ENCODE measurements at regions of chr3 and their contacts with region 1.

Region 1: GRCh38 chr3:69181592-69182211 is 59.3 kb upstream of the LMOD3 start:
- DNase-seq: peak; percentile 76
- H3K4me3 ChIP-seq: no peak overlapping the region
- H3K27ac ChIP-seq: peak overlapping the region; percentile 87
- H3K4me1 ChIP-seq: peaks cover 47% of the 10 kb centered on the region
- H3K27me3 ChIP-seq: no peaks in the 10 kb centered on the region
- CTCF ChIP-seq: no peak

Region 2: DNA sequence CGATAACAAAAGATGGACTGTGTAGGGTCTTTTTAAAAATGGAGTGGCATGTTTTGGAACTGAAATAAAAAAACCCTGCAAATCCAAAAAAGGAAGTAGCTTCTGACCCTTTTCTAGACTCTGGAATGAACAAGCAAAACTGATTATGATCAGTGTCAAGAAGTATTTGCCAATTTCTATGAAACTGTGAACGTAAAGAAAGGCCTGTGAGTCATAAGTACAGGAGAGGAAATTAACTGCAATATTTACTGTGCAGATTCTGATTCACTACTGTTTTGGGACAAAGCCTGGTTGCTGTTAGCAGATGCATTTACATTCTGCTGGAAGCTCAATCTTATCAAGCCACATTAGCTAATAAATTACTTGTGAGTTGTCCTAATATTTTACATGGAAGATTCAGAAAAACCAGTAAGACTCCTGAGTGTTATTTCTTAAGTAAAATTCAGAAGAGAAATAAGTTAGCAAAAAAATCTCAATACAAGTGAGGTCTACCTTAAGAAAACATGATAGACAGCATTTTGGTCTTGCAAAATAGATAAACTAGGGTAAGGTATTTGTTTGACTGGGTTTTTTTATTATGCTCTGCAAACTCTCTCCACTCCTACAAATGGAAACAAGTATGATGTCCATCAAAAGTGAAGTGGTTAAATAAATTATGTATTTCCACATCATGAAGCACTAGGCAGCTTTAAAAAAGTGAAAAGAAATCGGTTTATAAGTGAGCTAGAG is 30.9 kb after region 1 on chr3:
- CTCF ChIA-PET with region 1: no interaction called
- dilution Hi-C with region 1: no loop called
- in situ Hi-C with region 1: no loop called
- intact Hi-C with region 1: loop called (anchors 1 kb)
- DNase-seq: peak; percentile 92
- H3K4me3 ChIP-seq: no peak overlapping the region
- H3K27ac ChIP-seq: peak overlapping the region; percentile 86
- H3K4me1 ChIP-seq: peaks cover 9% of the 10 kb centered on the region
- H3K27me3 ChIP-seq: no peaks in the 10 kb centered on the region
- CTCF ChIP-seq: no peak